ENCODE measurements at regions of chr2 and their contacts with region 1.

Region 1: GRCh38 chr2:118003396-118003824 is 10.5 kb downstream of the CCDC93 start:
- DNase-seq: peak in 9 of 10 donors; percentile 3 to 76 (median 57)
- ATAC-seq: peak; percentile 99 to 100
- H3K4me3 Mint-ChIP-seq: no peak overlapping the region
- H3K27ac Mint-ChIP-seq: peak overlapping the region in 7 of 10 donors; percentile 1 to 92 (median 63)
- H3K4me1 Mint-ChIP-seq: peaks cover 9 to 16% (median 12%) of the 10 kb centered on the region in 4 donors
- H3K27me3 Mint-ChIP-seq: no peaks in the 10 kb centered on the region

Region 2: GRCh38 chr2:118013724-118014491 is 10.5 kb after region 1 on chr2 and contains the start of gene CCDC93:
- POLR2A ChIA-PET with region 1: interaction called, 19 read pairs
- DNase-seq: peak; percentile 79 to 93 (median 90)
- ATAC-seq: peak; percentile 86
- H3K4me3 Mint-ChIP-seq: peak within 1 kb of the TSS; percentile 89 to 97 (median 95)
- H3K27ac Mint-ChIP-seq: peak within 1 kb of the TSS; percentile 81 to 97 (median 94)
- H3K4me1 Mint-ChIP-seq: peaks cover 20 to 53% (median 37%) of the 10 kb centered on the region in 4 donors
- H3K27me3 Mint-ChIP-seq: peaks cover 0 to 7% (median 1%) of the 10 kb centered on the region in 5 donors
- polyA plus RNA-seq, gene CCDC93: 2.7 to 6.4 (median 3.8) TPM

Measured in naive thymus-derived CD8-positive, alpha-beta T cell (primary cell).